Ovary (tissue), 10 donors: ENCODE measurements at regions of chr6 and their contacts with region 1.

Region 1: DNA sequence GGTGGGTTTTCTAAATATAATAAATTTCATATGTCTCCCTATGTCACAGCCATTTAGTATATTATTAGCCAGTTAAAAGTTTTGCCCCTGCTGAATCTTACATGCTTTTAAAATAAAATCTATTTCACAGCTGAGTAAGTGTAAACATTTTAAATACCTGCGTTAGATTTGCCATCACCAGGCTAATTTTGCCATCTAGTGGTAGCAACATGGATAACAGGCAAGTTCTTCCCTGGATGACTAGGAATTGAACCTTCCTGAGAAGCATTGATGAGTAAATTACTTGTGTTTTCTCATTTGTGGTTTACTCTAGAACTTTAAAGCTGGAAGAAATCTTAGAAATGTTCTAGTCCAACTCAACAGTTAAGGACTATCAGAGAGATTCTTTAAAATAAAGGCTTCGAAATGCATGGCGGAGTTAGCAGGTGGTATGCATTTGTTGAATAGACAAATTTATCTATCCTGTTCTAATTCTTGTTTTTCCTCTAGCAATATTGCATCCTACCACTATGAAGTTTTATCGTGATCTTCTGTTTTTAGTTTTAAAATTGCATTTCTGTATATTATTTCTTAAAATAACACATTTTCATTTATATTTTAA is 2.6 kb downstream of the PRSS35 start:
- DNase-seq: peak in 1 of 5 donors; percentile 49
- H3K4me3 ChIP-seq: no peak overlapping the region
- H3K27ac ChIP-seq: no peak overlapping the region
- H3K4me1 ChIP-seq: peaks cover 6% of the 10 kb centered on the region
- H3K27me3 ChIP-seq: no peaks in the 10 kb centered on the region
- CTCF ChIP-seq: peak; percentile 66 to 84 (median 79)
- EP300 ChIP-seq: no peak
- POLR2A ChIP-seq: no peak

Region 2: DNA sequence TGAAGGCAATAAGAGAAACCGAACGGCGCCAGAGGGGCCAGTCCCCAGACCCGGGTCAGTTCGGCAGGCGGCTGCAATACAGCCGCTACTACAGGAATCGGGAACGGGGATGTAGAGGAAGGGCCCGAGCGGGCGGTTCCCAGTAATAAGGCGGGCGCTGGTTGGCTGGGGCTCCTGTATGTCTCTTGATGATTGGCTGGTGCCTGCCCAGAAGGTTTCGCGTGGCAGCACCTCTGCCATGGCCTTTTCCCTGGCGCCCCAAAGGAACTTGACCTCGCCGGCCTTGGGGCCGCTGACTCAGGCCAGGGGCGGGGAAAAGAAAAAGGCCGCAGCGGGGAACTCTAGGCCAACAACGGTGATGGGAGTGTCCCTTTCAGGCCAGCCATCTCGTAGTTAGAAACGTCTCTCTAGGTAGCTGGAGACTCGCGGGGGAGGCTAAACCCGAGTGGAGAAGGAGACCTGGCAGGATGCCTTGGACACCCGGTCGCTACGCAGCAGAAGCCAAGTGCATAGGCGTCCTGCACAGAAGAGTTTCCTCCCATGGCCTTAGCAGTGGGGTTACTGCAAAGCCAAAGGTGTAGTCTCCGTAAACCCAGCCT is 1267.2 kb before region 1 on chr6 and contains the start of gene IBTK:
- intact Hi-C with region 1: loop called in 1 of 4 experiments (anchors 10 kb)
- DNase-seq: peak; percentile 93 to 98 (median 95)
- H3K4me3 ChIP-seq: peak within 1 kb of the TSS; percentile 91
- H3K27ac ChIP-seq: peak within 1 kb of the TSS; percentile 72 to 93
- H3K4me1 ChIP-seq: peaks cover 2% of the 10 kb centered on the region
- H3K27me3 ChIP-seq: no peaks in the 10 kb centered on the region
- CTCF ChIP-seq: peak in 1 of 3 donors; percentile 13
- EP300 ChIP-seq: no peak
- POLR2A ChIP-seq: peak; percentile 67
- total RNA-seq, gene IBTK: 22.1 to 37.4 (median 31.7) TPM

Region 3: DNA sequence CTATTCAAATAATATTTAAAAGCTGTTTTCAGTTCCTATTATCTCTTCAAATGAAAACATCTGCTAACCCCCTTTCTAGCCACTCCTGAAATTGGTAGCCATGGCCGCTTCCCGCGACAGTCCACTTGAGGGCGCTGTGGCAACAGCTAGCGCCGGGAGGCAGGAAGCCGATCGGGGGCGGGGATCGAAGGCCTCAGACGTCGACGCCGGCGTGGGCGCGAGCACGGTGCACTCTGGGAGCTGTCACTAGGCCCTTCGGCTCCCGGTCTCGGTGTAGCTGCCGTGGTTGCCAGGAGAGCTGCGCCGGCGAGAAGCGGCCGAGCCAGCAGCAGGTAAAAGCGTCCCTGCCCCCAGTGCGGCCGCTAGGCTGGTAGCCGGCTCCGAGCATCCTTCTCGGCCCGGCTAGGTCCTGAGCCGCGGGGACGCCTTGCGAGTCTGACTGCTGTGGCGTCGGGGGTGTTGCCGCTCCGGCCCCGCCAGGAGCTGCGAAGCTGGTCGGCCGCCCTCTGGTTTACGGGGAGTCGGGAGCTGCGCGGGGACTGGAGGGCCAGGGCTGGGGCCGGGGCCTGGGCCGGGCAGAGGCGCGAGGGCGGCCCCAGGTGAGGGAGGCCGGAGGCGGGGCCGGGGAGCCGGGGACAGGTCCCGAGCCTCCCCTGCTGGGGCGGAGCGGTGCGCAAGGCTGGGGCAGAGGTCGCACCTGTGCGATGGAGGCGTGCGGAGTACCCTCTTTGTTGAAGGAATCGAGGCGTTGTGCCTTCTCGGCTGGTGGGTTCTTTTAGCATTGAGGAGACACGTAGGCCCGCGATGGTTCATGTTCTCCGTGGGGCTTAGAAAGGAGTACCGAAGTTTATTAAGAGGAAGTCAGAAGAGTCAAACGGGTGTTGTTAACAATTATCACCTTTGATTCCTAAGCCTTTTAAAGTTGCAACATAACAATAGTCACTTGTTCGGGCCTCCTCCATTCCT is 447.2 kb before region 1 on chr6 and contains the start of gene DOP1A:
- intact Hi-C with region 1: loop called in 2 of 4 experiments (anchors 5 kb)
- DNase-seq: peak; percentile 92 to 96 (median 95)
- H3K4me3 ChIP-seq: peak within 1 kb of the TSS; percentile 95
- H3K27ac ChIP-seq: peak within 1 kb of the TSS; percentile 76 to 77
- H3K4me1 ChIP-seq: peaks cover 2% of the 10 kb centered on the region
- H3K27me3 ChIP-seq: no peaks in the 10 kb centered on the region
- CTCF ChIP-seq: peak; percentile 85 to 99 (median 90)
- EP300 ChIP-seq: no peak
- POLR2A ChIP-seq: peak; percentile 46
- total RNA-seq, gene DOP1A: 24.3 to 32.9 (median 28.5) TPM

Region 4: DNA sequence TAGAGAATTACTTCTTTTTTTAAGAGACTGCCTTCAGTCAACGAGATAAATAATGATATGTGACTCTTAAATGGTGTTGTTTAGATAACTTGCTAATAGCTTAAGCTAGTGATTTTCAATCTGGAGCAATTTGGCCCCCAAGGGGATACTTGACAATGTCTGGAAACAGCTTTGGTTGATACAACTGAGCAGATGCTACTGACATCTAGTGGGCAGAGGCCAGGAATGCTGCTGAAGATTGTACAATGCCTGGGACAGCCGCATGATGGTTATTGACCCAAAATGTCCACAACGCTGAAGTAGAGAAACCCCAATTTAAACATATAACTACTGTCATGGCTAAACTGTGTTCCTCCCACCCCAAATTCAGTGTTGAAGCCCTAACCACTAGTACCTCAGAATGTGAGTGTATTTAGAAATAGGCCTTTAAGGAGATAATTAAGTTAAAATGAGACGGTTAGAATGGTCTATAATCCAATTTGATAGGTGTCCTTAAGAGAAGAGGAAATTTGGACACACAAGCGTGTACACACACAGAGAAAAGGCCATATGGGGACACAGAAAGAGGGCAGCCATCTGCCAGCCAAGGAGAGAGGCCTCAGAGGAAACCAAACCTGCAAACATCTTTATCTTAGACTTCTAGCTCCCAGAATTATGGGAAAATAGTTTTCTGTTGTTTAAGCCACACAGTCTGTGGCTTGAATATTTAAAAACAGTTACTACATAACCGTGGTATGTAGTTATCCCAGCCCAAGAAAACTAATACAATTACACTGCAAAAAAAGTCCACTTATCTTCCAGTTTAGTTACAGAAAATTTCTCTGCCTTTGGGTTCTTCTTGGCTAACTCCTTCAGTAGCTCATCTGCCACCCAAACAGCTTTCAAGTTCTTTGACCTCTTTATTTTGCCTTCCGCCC is 299.6 kb before region 1 on chr6:
- intact Hi-C with region 1: loop called (anchors 5 kb)
- DNase-seq: peak; percentile 45 to 74 (median 58)
- H3K4me3 ChIP-seq: no peak overlapping the region
- H3K27ac ChIP-seq: peak overlapping the region in 1 of 2 donors; percentile 40
- H3K4me1 ChIP-seq: peaks cover 1% of the 10 kb centered on the region
- H3K27me3 ChIP-seq: no peaks in the 10 kb centered on the region
- CTCF ChIP-seq: peak; percentile 59 to 75 (median 62)
- EP300 ChIP-seq: no peak
- POLR2A ChIP-seq: no peak

Region 5: DNA sequence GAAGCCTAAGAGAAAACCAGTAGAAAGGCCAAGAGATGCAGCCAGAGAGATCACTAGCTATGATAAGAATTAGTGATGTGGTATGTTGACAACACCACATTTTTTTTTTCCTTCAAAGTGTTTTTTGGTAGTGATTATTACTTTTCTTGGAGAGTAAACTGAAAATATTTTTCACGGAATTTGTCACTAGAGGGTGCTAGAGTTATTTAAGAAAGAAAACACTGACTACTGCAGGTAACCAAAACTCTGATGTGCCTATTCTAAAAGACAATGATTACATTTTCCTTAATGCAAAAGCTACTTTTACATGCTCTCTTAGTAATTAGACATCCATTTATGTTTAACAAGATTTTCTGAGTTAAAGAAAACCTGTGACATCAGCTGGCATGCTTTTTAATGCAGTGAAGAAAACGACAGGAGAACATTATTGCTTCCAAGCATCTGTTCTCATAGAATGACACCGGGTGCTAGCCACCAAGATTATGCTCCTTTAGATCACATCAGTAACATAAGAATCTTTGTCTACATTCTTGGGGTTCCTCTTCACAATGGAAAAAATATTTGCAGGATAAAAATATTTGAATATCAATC is 293.0 kb before region 1 on chr6:
- intact Hi-C with region 1: loop called (anchors 5 kb)
- DNase-seq: no peak
- H3K4me3 ChIP-seq: no peak overlapping the region
- H3K27ac ChIP-seq: no peak overlapping the region
- H3K4me1 ChIP-seq: peaks cover 1% of the 10 kb centered on the region
- H3K27me3 ChIP-seq: no peaks in the 10 kb centered on the region
- CTCF ChIP-seq: peak in 2 of 3 donors; percentile 9 to 40
- EP300 ChIP-seq: no peak
- POLR2A ChIP-seq: no peak

Region 6: DNA sequence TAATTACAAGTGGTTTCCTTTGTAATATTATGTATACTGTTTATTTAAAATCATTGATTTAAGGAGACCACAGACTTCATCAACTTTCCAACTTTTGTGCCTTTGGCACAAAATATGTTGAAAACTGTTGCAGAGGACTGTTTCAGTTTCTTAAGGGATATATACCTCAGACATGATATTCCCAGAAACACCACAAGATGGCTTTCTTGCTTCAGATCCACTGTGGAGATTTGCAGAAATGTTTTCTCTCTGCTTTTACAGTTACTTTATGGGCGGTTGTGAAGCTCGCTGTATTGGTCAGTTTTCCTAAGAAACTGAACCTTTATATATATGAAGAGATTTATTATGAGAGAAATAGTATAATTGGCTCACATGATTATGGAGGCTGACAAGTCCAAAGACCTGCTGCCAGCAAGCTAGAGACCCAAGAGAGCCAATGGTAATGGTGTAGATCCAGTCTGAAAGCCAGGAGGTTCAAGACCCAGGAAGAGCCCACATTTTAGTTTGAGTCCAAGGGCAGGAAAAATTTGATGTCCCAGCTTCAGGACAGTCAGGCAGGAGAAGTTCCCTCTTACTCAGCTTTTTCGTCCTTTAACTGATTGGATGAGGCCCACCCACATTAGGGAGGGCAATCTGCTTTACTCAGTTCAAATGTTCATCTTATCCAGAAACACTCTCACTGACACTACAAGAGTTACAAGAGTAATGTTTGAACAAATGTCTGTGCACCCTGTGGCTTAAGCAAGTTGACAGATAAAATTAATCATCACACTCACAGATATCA is 96.9 kb before region 1 on chr6:
- intact Hi-C with region 1: loop called in 3 of 4 experiments (anchors 2 to 10 kb)
- DNase-seq: no peak
- H3K4me3 ChIP-seq: no peak overlapping the region
- H3K27ac ChIP-seq: no peak overlapping the region
- H3K4me1 ChIP-seq: no peaks in the 10 kb centered on the region
- H3K27me3 ChIP-seq: no peaks in the 10 kb centered on the region
- CTCF ChIP-seq: peak; percentile 29 to 63 (median 56)
- EP300 ChIP-seq: no peak
- POLR2A ChIP-seq: no peak

Region 7: DNA sequence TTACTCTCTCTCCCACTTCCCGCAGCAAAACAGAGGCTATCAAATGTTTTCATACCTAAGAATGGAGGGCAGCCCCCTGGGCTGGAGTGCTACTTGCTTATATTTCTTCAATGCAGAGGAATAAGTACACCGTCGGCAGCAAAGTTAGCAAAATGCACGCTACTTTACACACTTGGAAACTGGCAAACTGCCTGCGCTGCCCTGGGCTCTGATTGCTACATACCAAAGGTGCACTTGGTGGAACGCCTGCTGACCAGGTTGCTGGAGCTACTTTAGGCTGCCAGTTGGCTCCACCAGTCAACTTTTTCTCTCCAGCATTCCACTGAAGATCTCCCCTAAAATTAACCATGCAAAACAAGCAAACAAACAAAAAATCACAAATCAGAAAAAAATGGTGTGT is 59.8 kb after region 1 on chr6:
- intact Hi-C with region 1: no loop called
- DNase-seq: no peak
- H3K4me3 ChIP-seq: no peak overlapping the region
- H3K27ac ChIP-seq: no peak overlapping the region
- H3K4me1 ChIP-seq: no peaks in the 10 kb centered on the region
- H3K27me3 ChIP-seq: no peaks in the 10 kb centered on the region
- CTCF ChIP-seq: no peak
- EP300 ChIP-seq: no peak
- POLR2A ChIP-seq: no peak